Activated CD4-positive, alpha-beta T cell treated with anti-CD3 and anti-CD28 coated beads for 36 hours (primary cell): ENCODE measurements at regions of chr13 and their contacts with region 1.

Region 1: DNA sequence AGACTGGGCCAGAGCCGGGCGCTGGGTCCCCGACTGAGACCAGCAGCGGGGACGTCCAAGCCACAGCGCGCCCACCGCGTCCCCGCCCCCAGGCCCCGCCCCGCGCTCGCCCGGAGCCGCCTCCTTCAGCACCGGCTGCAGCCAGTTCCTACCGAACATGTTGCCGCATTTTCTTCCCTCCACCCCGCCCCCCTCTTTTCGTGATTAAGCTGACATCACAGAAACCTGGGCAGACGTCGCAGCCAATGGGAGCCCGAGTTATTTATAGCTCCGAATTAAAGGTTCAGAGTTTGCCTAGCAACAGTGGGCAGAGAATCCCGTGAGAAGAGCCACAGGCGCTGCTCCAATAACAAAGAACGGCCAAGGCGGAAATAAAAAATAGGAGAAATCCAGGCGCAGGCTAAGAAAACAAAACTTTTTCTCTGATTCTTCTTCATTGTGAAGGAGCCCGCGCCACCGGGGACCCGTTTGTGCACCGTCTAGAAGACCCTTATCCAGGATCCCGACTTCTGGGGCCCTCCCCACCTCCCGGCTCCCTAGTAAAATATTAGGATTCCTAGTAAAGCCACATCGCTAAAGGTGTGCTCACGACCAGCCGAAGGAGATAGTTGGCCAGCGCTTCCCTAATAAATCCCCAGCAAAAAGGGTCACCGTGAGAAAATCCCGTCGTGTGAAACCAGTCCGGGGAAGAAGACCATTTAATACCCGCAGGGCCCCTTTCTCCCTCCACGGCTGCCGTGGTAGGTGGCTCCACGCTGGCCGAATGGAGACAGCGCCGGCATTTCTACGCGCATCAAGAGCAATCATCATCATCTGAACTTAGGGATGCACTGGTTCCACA is 61.7 kb downstream of the SERP2 start:
- DNase-seq: peak; percentile 94
- ATAC-seq: peak; percentile 84
- H3K4me3 Mint-ChIP-seq: peak overlapping the region; percentile 73
- H3K27ac Mint-ChIP-seq: peak overlapping the region; percentile 55
- H3K4me1 Mint-ChIP-seq: peaks cover 18% of the 10 kb centered on the region
- H3K27me3 Mint-ChIP-seq: peaks cover 11% of the 10 kb centered on the region

Region 2: GRCh38 chr13:44050450-44051063 is 384.8 kb before region 1 on chr13:
- CTCF ChIA-PET with region 1: interaction called, 10 read pairs
- POLR2A ChIA-PET with region 1: interaction called, 4 read pairs
- intact Hi-C with region 1: loop called (anchors 1 kb)
- DNase-seq: no peak
- ATAC-seq: no peak
- H3K4me3 Mint-ChIP-seq: no peak overlapping the region
- H3K27ac Mint-ChIP-seq: no peak overlapping the region
- H3K4me1 Mint-ChIP-seq: peaks cover 4% of the 10 kb centered on the region
- H3K27me3 Mint-ChIP-seq: peaks cover 25% of the 10 kb centered on the region

Region 3: DNA sequence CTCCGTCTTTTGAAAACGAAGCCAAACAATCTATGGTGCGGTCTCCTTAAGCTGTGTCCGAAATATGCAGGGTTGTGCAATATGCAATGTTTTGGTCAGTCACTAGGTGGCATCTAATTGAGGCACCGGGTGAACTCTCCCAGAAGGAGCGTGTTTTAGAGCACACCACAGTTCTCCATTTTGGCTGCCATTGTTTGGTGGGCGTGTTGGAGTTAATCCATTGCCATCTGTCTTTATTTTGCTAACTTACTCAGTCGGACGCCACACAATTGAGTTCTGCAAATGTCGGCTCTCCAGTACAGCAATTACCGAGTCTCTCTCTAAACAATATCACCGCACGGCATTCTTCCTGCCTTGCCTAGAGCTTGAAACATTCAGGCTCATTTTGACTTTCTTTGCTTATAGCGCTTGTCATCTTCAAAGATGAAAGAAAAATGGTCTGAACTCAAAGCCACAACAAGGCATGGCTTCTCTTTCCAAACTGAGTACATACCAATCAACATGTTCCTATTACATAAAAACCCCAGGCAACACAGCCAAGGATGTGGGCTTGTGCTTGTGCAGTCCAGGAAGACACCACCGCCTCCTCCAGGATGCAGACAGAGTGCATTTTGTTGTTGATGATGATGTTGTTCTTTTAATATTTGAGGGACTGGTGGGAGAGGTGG is 243.7 kb before region 1 on chr13:
- CTCF ChIA-PET with region 1: interaction called, 14 read pairs
- POLR2A ChIA-PET with region 1: no interaction called
- intact Hi-C with region 1: loop called (anchors 1 kb)
- DNase-seq: peak; percentile 63
- ATAC-seq: peak; percentile 60
- H3K4me3 Mint-ChIP-seq: peak overlapping the region; percentile 10
- H3K27ac Mint-ChIP-seq: peak overlapping the region; percentile 21
- H3K4me1 Mint-ChIP-seq: peaks cover 30% of the 10 kb centered on the region
- H3K27me3 Mint-ChIP-seq: peaks cover 17% of the 10 kb centered on the region

Region 4: DNA sequence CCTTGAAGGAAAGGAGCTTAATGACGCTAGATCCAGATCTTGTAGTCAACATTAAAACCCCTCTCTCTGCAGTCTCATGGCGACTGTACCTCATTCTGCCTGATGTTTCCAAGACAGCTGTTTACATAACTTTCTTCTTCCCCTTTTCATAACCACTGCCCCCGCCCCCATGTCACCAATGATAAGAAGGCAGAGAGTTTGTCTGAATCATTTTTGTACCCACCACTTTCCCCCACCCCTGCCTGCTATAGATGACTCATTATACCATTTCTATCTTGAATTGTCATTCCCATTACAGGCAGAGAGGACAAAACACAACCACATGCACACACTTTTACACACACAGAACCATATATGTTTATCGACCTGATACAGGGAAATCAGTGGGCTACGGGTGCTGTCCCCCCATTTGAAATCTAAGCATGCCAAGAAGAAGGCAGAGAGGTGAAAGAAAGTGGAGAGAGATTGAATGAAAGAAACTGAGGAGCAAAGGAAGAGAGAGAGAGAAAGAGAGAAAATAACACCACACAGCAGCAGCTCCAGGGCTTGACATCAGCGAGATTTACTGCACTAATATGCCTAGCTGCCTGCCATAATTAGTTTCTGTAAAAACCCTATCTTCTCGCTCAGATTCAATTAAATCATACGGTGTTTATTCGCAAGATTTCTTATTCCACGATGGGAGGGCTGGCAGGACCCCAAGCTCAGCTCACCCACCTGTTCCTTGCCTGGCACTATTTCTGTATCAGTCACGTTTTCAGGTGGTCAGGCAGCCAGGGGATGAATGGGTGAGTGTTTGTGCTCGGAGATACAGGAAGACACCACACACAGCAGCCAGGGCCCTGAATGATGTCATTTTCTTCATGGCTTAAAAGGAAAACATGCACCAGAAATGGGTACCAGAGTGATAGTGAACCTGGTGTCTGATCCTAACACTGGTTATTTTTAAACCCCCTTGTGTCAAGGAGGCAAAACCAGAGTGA is 176.0 kb before region 1 on chr13:
- CTCF ChIA-PET with region 1: no interaction called
- POLR2A ChIA-PET with region 1: no interaction called
- intact Hi-C with region 1: loop called in 1 of 2 experiments (anchors 1 kb)
- DNase-seq: peak; percentile 90
- ATAC-seq: peak; percentile 87
- H3K4me3 Mint-ChIP-seq: peak overlapping the region; percentile 62
- H3K27ac Mint-ChIP-seq: peak overlapping the region; percentile 94
- H3K4me1 Mint-ChIP-seq: peaks cover 21% of the 10 kb centered on the region
- H3K27me3 Mint-ChIP-seq: peaks cover 5% of the 10 kb centered on the region

Region 5: DNA sequence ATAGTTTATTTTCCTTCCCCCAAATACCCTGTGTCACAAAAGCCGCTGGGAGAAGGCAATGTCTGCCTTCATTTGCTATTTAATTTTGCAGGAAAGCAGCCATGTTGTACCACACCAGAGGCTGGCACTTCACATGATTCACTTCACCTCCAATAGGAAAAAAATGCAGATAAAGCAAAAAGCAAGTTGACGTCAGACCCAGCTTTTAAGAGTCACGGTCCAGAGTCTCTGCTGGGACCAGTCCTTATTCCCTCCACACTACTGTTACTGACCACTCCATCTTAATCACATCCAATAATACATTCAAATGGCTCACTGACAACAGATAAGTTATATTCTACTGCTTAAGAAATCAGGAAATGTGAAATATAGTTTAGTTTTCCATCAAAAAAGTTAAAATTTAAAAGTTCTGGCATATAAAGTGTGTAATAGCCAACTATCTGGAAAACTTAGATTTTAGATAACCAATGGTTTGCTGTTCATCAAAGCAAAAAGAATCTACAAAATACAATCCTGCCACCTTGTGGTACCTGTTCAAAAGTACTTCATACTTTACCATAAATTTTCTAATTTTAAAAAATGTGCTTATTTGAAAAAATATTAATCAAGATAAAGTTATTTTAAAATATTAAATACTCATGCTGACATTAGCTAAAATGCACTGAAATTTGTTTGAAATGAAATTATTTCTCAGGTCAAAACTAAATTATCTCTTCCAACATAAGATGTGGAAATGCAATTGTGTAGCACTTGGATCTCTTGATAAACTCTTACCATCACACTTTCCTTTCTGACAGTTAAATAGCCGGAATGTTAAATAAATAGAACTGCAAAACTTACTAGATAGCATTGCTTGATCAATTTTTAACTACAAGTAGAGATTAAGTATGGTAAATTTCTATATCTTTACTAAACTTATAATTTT is 35.5 kb after region 1 on chr13:
- CTCF ChIA-PET with region 1: interaction called, 7 read pairs
- POLR2A ChIA-PET with region 1: no interaction called
- intact Hi-C with region 1: loop called in 1 of 2 experiments (anchors 2 kb)
- DNase-seq: no peak
- ATAC-seq: no peak
- H3K4me3 Mint-ChIP-seq: no peak overlapping the region
- H3K27ac Mint-ChIP-seq: no peak overlapping the region
- H3K4me1 Mint-ChIP-seq: no peaks in the 10 kb centered on the region
- H3K27me3 Mint-ChIP-seq: no peaks in the 10 kb centered on the region